Common myeloid progenitor, CD34-positive (primary cell): ENCODE measurements at regions of chr12 and their contacts with region 1.

Region 1: GRCh38 chr12:56571126-56571525 is 49.5 kb downstream of the RBMS2 start:
- DNase-seq: no peak
- H3K4me3 ChIP-seq: no peak overlapping the region
- H3K27ac ChIP-seq: no peak overlapping the region
- H3K4me1 ChIP-seq: peaks cover 4 to 47% (median 14%) of the 10 kb centered on the region in 4 experiments
- H3K27me3 ChIP-seq: no peaks in the 10 kb centered on the region

Region 2: DNA sequence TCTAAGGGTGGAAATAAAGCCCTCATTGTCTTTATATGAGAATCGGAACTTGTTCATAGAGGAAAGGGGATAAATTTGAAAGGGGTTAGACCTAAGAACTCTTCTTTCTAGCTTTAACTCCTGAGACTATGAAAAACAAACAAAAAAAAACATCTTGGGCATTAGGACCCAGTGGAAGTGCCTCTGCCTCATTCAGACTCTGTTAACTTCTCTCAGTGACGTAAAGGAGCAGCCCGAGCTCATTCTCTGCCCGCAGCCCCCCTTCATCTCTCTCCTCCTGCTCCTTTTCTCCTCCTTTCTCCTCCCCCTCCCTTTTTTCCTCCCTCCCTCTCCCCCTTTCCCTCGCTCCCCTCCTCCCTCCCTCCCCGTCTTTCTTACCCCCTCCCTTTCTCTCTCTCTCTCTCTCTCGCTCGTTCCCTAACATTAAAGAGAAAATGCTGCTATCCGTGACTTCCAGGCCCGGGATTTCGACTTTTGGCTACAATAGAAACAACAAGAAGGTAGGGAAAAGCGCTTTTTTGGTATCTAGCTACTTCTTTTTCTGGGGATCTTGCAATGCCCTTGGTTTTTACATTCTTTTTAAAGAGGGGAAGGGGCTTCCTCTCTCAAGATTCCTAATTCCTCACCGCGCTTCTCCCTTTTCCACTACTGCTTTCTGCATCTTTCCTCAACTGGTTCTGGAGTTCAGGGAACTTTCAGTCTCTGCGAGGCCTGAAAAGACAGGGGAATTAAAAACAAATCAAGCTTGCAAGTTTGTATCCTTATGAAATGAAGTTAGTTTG is 49.3 kb before region 1 on chr12 and contains the start of gene RBMS2:
- CTCF ChIA-PET with region 1: interaction called, 76 read pairs
- POLR2A ChIA-PET with region 1: interaction called, 6 read pairs
- DNase-seq: peak; percentile 80 to 93 (median 86)
- H3K4me3 ChIP-seq: peak within 1 kb of the TSS in 6 of 7 experiments; percentile 67 to 93 (median 74)
- H3K27ac ChIP-seq: peak within 1 kb of the TSS; percentile 75 to 83
- H3K4me1 ChIP-seq: peaks cover 9 to 34% (median 20%) of the 10 kb centered on the region in 4 experiments
- H3K27me3 ChIP-seq: no peaks in the 10 kb centered on the region

Region 3: GRCh38 chr12:56551070-56551469 is 20.1 kb before region 1 on chr12:
- CTCF ChIA-PET with region 1: interaction called, 15 read pairs
- POLR2A ChIA-PET with region 1: no interaction called
- DNase-seq: no peak
- H3K4me3 ChIP-seq: no peak overlapping the region
- H3K27ac ChIP-seq: no peak overlapping the region
- H3K4me1 ChIP-seq: no peaks in the 10 kb centered on the region
- H3K27me3 ChIP-seq: no peaks in the 10 kb centered on the region

Region 4: GRCh38 chr12:56581418-56582145 is 10.5 kb after region 1 on chr12:
- CTCF ChIA-PET with region 1: interaction called, 17 read pairs
- POLR2A ChIA-PET with region 1: interaction called, 5 read pairs
- DNase-seq: peak; percentile 82 to 93 (median 88)
- H3K4me3 ChIP-seq: peak overlapping the region in 2 of 7 experiments; percentile 1 to 12
- H3K27ac ChIP-seq: peak overlapping the region in 1 of 2 experiments; percentile 67
- H3K4me1 ChIP-seq: peaks cover 10 to 27% (median 21%) of the 10 kb centered on the region in 4 experiments
- H3K27me3 ChIP-seq: no peaks in the 10 kb centered on the region